AG04449 (cell line): ENCODE measurements at regions of chr22 and their contacts with region 1.

Region 1: DNA sequence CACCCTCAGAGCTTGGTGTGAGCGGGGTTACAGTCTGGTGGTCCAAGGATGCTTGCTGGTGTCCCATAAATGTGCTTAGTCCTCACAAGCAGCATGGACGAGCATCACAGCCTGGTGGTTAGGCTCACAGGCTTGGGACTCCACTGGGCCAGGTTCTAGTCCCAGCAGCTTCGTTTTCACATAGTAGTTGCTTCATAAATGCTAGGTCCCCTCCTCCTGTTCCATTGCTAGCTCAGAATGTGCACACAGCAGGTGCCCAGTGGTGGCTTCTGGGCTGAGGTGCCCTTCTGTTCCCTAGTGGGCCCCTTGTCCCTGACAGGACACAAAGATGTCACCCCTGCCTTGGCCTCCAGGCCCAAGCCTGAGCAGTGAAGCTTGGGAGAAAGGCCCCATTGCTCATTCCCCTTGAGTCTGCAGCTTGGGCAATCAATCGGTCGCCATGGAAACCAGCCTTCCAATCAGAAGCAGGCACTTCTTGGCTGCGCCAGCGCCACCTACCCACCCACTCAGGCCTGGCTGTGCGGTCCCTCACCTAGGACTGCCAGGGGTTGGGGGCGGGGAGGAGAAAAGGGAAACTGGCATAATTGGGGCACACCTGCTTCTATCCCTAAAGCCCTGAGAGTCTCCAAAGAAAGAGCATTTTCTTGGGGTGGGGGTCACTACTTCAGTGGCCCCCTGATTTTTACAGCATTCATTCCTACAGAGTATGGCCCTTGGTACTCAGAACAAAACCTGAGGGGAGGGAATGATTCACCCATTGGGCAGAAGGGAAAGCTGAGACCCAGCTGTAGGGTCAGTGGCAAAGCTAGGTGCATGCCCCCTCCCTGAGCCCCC is 48.1 kb downstream of the CYTH4 start:
- DNase-seq: no peak
- H3K4me3 ChIP-seq: no peak overlapping the region
- CTCF ChIP-seq: peak; percentile 40

Region 2: DNA sequence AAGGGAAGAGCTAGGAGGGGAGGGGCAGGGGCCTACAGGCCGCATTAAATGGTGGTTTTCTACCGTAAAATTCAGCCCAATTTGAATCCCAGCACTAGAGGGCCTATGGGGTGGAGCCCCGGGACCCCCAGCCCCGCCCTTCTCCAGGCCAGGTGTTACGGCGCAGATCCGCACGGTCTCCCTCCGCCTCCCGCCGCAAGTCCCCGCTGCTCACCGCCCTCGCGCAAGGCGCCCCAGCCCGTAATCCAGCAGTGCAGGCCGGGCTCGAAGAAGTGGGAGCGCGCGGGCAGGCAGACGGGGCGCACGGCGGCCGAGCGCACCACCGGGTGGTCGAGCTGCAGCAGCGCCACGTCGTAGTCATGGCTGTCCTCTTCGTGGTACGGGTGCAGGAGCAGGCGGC is 261.6 kb before region 1 on chr22:
- CTCF ChIA-PET with region 1: no interaction called
- POLR2A ChIA-PET with region 1: no interaction called
- DNase-seq: no peak
- H3K4me3 ChIP-seq: no peak overlapping the region
- CTCF ChIP-seq: no peak

Region 3: DNA sequence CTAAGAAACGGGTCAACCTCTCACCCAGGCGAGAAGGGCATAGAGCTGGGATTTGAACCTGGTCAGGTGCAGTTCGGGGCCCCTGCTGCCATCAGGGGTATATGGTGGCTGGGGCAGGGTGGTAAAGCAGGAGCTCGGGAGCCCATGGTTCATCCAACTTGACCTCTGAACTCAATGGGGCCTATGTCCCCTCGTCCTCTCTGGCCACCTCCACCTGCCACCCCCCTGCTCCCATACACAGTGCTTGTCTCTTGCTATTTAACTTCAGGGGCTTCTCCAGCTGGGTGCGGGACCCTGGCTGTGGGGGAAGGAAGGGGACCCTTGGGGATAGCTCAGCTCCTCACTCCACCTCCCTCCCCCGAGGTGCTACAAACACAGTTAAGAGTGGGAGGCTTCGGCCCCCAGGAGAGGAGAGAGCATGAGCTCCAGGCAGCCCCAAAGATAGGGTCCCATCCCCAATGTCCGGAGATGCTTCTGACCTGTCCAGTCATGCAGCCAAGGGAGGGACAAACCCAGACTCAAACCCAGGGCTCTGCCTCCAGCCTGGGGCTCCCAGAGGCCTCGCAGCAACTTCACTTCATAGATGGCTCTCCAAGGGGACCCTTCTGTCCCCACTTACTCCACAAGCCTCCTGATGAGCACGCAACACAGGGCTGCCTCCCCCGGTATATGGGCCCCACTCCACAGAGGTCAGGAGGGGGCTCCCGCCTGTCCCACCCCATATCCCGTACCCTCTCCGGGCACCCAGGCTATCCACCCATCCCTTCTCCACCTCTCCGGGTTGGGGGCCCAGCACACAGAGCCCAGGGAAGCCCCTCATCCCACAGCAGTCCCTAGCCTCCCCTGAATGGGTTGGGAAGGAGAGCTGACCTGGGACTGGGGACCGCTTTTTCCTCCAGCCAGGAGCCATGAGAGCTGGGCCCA is 181.4 kb before region 1 on chr22:
- CTCF ChIA-PET with region 1: no interaction called
- POLR2A ChIA-PET with region 1: no interaction called
- DNase-seq: no peak
- H3K4me3 ChIP-seq: no peak overlapping the region
- CTCF ChIP-seq: no peak

Region 4: DNA sequence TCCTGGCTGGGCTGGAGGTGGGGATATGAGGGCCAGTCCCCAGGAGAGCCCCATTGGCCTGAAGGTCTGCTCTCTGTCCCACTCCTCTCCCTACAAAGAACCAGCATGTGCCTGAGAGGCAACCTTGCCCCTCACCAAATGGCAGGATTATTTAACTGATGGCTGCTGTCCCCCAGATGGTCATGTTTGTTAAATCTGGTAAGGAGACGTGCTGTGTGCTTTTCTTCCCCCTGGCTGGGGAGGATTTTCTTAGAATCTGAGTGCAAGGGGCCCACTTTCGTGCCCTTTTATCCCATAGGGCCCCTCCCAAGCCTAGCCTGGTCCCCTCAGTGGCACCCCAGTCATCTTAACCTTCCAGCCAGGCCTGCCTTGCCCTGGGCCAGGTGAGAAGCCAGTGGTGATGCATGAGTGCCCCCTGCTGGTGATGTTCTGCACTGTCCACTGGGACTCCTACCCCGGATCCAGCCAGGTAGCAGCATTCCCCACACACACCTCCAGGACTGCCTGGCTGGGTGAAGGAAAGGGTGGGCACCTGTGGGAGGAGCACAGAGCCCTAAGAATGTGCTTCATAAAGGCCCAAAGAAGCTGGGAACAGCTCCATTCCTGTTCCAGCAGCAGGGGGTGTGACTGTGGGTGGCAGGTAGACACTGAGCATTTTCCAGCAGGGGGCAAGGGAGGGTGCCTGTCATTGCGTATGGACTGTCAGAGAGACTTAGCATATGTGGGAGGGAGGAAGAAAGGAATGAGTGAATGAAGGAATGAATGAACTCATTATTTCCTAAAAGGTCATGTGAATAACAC is 126.9 kb after region 1 on chr22:
- CTCF ChIA-PET with region 1: interaction called, 559 read pairs
- POLR2A ChIA-PET with region 1: no interaction called
- DNase-seq: no peak
- H3K4me3 ChIP-seq: no peak overlapping the region
- CTCF ChIP-seq: peak; percentile 90

Region 5: GRCh38 chr22:37734964-37735451 is 404.6 kb after region 1 on chr22:
- CTCF ChIA-PET with region 1: no interaction called
- POLR2A ChIA-PET with region 1: no interaction called
- DNase-seq: no peak
- H3K4me3 ChIP-seq: no peak overlapping the region
- CTCF ChIP-seq: peak; percentile 41